Left cardiac atrium (tissue), 4 donors: ENCODE measurements at regions of chr7 and their contacts with region 1.

Region 1: DNA sequence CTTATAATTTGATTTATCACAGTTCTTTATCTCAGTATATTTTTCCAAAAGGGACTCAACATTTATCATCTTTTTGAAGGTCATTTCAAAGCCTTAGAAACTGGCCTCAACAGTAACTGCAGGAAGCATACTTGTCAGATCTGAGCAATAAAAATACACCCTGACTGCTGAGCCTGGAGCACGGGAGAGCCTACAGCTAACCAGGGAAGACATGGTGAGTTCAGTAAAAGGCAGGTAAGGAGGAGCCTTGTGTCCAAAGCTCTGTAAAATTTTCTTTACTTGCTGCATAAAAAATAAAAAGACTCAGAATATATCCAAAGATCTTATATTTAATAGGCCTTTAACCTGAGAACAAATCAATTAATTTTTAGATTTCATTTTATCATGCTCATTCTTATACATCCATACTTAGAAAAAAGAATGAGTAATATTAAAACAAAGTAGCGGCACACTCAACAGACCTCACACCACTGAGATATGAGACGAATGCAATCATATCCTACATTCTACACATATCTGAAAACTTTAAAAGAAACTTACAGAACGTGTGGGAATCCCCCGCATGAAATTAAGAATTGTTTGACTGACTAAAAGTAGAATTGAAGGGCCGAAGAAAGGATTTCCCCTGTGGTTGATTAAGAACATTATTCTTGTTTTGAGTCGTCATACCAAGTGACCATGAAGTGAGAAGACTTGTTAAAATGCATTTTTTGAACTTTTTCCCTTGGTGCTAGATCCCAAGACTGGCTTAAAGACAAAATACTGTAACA is 296.4 kb upstream of the MKLN1 start:
- DNase-seq: no peak
- ATAC-seq: no peak

Region 2: GRCh38 chr7:130961128-130961601 is 70.1 kb before region 1 on chr7:
- intact Hi-C with region 1: no loop called
- DNase-seq: no peak
- ATAC-seq: peak; percentile 62 to 71

Region 3: GRCh38 chr7:130982160-130982638 is 49.1 kb before region 1 on chr7:
- intact Hi-C with region 1: loop called in 1 of 2 experiments (anchors 10 kb)
- DNase-seq: no peak
- ATAC-seq: peak in 1 of 2 donors; percentile 63